AG04450 (cell line): ENCODE measurements at regions of chr16 and their contacts with region 1.

Region 1: GRCh38 chr16:50806099-50807062 is 64.5 kb downstream of the CYLD start:
- DNase-seq: peak; percentile 77
- H3K4me3 ChIP-seq: peak overlapping the region; percentile 60
- H3K27ac ChIP-seq: peak overlapping the region; percentile 48
- H3K27me3 ChIP-seq: no peaks in the 10 kb centered on the region
- CTCF ChIP-seq: peak; percentile 75

Region 2: GRCh38 chr16:50065624-50066481 is 740.5 kb before region 1 on chr16 and contains the start of gene HEATR3:
- CTCF ChIA-PET with region 1: interaction called, 10 read pairs
- POLR2A ChIA-PET with region 1: no interaction called
- DNase-seq: peak; percentile 85
- H3K4me3 ChIP-seq: peak within 1 kb of the TSS; percentile 99
- H3K27ac ChIP-seq: peak within 1 kb of the TSS; percentile 84
- H3K27me3 ChIP-seq: no peaks in the 10 kb centered on the region
- CTCF ChIP-seq: no peak
- polyA plus RNA-seq, gene HEATR3: 15.0 and 17.1 TPM in 2 replicates

Region 3: GRCh38 chr16:50368410-50369132 is 437.8 kb before region 1 on chr16 and contains the start of gene BRD7:
- CTCF ChIA-PET with region 1: interaction called, 52 read pairs
- POLR2A ChIA-PET with region 1: no interaction called
- DNase-seq: no peak
- H3K4me3 ChIP-seq: peak within 1 kb of the TSS; percentile 70
- H3K27ac ChIP-seq: no peak within 1 kb of the TSS
- H3K27me3 ChIP-seq: peaks cover 4% of the 10 kb centered on the region
- CTCF ChIP-seq: peak; percentile 30
- polyA plus RNA-seq, gene BRD7: 49.2 and 69.2 TPM in 2 replicates

Region 4: GRCh38 chr16:50677351-50677750 is 129.0 kb before region 1 on chr16:
- CTCF ChIA-PET with region 1: interaction called, 42 read pairs
- POLR2A ChIA-PET with region 1: no interaction called
- DNase-seq: no peak
- H3K4me3 ChIP-seq: no peak overlapping the region
- H3K27ac ChIP-seq: no peak overlapping the region
- H3K27me3 ChIP-seq: no peaks in the 10 kb centered on the region
- CTCF ChIP-seq: 0 out of 2 replicates have a peak, but pooled peaks have one; percentile 12

Region 5: DNA sequence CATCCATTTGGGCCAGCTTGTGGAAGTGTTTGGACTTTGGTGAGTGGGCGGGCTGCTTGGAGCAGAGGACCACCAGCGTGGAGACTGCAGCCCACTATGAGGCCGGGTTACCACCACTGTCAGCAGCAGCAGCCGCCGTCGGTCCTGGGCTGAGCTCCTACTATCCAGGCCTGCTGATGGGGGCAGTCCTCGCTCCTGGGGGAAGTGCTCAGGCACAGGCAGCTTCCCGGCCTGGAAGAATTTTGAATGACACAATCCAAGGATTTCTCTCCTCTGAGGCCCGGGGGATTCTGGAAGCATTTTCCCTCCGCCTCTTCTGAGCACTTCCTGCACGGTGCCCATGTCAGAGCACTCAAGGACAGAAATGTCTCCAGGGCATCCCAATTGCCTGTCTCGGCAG is 118.3 kb before region 1 on chr16:
- CTCF ChIA-PET with region 1: no interaction called
- POLR2A ChIA-PET with region 1: no interaction called
- DNase-seq: no peak
- H3K4me3 ChIP-seq: no peak overlapping the region
- H3K27ac ChIP-seq: no peak overlapping the region
- H3K27me3 ChIP-seq: peaks cover 4% of the 10 kb centered on the region
- CTCF ChIP-seq: no peak

Region 6: DNA sequence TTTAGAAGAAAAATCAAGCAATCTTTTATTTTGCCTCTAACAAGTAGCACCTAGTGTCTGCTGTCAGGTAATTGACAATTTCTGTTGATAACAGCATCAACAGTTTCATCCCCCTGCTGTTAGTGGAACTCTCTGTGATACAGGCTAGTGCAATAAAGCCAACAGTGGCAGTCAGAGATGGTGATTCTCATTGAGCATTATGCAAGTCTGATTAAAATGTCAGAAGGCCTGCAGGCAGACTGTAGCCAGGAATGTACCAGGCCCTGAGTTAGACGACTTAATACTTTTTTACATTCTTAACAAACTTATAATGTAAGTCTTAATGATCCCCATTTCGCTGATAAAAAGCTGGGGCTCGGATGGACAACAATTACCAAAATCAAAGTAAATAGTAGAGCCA is 49.9 kb before region 1 on chr16:
- CTCF ChIA-PET with region 1: interaction called, 69 read pairs
- POLR2A ChIA-PET with region 1: no interaction called
- DNase-seq: no peak
- H3K4me3 ChIP-seq: no peak overlapping the region
- H3K27ac ChIP-seq: no peak overlapping the region
- H3K27me3 ChIP-seq: no peaks in the 10 kb centered on the region
- CTCF ChIP-seq: no peak

Region 7: DNA sequence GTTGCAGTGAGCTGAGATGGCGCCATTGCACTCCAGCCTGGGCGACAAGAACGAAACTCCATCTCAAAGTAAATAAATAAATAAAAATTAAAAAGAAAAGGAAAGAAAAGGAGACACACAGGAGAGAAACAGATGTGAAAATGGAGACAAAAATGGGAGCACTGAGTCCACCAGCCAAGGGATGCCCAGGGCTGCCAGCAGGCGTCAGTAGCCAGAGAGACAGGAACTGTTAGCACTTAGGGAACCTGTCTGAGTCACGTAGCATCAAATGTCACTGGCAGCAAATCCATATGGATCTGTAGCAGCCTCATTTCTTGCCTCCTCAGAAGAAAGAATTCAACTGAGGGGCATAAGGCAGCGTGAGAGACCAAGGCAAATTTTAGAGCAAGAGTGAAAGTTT is 15.2 kb after region 1 on chr16:
- CTCF ChIA-PET with region 1: interaction called, 17 read pairs
- POLR2A ChIA-PET with region 1: no interaction called
- DNase-seq: no peak
- H3K4me3 ChIP-seq: no peak overlapping the region
- H3K27ac ChIP-seq: no peak overlapping the region
- H3K27me3 ChIP-seq: peaks cover 7% of the 10 kb centered on the region
- CTCF ChIP-seq: peak; percentile 24; the same call in 1 of the 2 replicates